HEK293T (cell line): ENCODE measurements at regions of chr6 and their contacts with region 1.

Region 1: GRCh38 chr6:139375232-139376016 is 976 bp upstream of the CITED2 start:
- DNase-seq: peak; percentile 84

Region 2: GRCh38 chr6:139271056-139271455 is 104.4 kb before region 1 on chr6:
- CTCF ChIA-PET with region 1: no interaction called
- POLR2A ChIA-PET with region 1: no interaction called
- DNase-seq: no peak

Region 3: DNA sequence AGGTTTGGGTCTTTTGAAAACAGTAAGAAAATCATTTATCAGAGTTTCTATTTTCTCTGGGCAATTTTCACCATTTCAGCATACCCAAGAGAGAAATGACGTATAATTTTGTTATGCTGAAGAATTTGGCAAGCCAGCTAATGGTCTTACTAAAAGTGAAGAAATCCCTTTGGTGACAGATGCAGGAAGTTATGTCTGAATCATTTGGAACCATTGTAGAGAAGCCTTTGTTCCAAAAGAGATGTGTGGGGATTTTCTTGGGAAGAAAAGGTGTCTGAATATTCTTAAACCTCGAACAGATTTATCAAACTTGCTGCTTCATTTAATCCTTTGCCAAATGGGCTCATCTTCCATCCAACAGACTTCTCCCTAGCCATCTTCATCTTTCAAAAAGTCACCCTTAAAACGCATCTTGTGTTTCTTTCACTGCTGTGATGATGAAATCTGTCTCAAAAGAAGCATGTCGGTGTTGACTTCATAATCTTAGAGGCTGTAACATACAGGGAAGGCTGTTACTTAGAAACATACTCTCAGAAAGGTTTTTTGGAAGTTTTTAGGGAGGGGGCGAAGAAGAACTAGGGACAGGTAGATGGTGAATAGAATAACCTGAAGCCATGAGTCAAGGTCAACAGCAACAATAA is 40.5 kb before region 1 on chr6:
- CTCF ChIA-PET with region 1: no interaction called
- POLR2A ChIA-PET with region 1: no interaction called
- DNase-seq: no peak

Region 4: DNA sequence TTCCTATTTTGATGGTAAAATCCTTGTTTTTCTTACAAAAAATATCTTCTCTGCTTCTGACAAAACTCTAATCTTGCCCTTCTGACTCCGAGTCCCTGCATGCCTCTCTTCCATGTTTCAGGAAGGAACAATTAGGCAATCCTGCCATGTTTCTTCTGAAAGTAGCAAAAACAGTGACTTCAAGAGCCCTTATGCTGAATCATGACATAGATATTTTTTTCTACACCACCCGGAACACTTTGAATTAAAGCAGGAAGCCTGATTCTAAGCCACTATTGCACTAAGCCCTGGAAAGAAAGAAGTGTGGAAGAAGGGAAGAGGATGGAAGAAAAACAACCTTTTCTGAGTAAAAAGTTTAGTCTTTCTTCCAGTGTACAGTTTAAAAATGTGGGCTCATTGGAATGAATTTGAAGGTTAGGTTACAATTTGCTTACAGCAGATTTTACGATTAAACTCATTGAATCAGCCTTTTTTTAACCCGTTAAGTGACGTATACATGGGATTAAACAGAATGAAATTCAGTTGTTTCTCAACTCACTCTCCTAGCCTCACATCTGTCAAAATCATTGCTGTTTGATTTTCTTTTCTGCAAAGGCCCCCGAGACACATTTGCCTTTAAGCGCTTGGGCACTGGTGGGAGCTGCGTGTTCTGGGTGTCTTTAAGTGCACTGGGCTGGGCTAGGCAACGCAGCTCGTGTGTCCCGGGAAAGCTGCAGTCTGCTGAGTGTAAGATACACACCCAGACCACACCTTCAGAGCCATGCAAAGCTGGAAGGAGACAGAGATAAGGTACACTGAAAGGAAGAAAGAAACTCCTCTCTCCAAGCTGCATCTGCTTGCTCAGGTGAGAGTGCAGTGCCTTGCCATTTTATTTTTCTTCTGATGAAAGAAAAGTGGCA is 158.4 kb after region 1 on chr6:
- CTCF ChIA-PET with region 1: interaction called, 3 read pairs
- POLR2A ChIA-PET with region 1: interaction called, 10 read pairs
- DNase-seq: no peak

Region 5: GRCh38 chr6:139595183-139595582 is 219.8 kb after region 1 on chr6:
- CTCF ChIA-PET with region 1: no interaction called
- POLR2A ChIA-PET with region 1: interaction called, 20 read pairs
- DNase-seq: no peak

Region 6: DNA sequence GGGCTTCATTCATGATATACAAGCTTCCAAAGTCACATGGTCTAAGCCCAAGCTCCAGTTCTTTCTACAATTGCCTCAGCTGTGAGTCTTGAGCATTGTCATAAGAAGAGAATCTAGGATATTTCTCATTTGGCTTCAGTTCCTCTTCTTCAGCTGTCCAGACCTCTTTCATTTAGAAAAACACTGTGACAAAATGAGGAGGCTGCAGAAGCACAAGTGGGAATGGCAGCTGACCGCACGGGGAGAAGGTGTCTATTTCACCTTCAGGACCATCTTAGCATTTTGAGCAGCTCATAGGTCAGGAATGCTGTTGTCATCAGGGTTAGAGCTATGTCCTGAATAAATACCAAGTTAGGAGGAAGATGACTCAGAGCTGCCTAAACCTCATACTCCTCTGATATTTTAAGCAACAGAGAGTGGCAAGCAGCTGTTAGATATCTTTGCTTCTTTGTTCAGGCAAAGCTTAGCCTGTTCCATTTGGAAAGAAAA is 389.1 kb after region 1 on chr6:
- CTCF ChIA-PET with region 1: no interaction called
- POLR2A ChIA-PET with region 1: interaction called, 17 read pairs
- DNase-seq: no peak

Region 7: DNA sequence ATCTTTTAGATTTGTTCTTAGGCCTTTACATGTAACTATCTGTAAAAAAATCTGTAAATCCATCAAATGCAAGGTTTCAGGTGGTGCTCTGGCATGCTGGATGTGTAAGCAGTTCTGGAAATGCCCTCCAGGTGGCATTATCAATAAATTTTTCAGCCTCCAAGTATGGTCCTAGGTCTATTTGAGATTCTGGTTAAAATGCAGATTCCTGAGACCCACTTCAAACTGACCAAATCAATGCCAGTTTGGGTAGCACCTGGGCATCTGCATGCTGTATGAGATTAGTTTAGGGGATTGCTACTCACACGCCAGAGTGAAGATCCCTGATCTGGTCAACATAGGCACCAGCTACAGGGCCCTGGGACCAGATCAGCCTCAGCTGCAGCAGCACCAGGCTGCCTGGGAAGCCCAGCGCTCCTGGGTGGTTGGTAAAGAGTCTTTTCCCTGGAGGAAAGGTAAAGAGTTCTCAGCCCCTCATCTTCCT is 506.3 kb after region 1 on chr6:
- CTCF ChIA-PET with region 1: interaction called, 5 read pairs
- POLR2A ChIA-PET with region 1: interaction called, 11 read pairs
- DNase-seq: peak; percentile 48